ENCODE measurements at regions of chr16 and their contacts with region 1.

Region 1: GRCh38 chr16:10509534-10510025 is 70.8 kb downstream of the EMP2 start:
- DNase-seq: peak; percentile 58
- H3K4me3 Mint-ChIP-seq: no peak overlapping the region
- H3K27ac Mint-ChIP-seq: no peak overlapping the region
- H3K4me1 Mint-ChIP-seq: peaks cover 8% of the 10 kb centered on the region
- H3K27me3 Mint-ChIP-seq: peaks cover 11% of the 10 kb centered on the region

Region 2: GRCh38 chr16:10256784-10257641 is 252.6 kb before region 1 on chr16:
- CTCF ChIA-PET with region 1: interaction called, 28 read pairs
- POLR2A ChIA-PET with region 1: no interaction called
- DNase-seq: peak; percentile 43
- H3K4me3 Mint-ChIP-seq: no peak overlapping the region
- H3K27ac Mint-ChIP-seq: no peak overlapping the region
- H3K4me1 Mint-ChIP-seq: peaks cover 3% of the 10 kb centered on the region
- H3K27me3 Mint-ChIP-seq: peaks cover 8% of the 10 kb centered on the region

Region 3: DNA sequence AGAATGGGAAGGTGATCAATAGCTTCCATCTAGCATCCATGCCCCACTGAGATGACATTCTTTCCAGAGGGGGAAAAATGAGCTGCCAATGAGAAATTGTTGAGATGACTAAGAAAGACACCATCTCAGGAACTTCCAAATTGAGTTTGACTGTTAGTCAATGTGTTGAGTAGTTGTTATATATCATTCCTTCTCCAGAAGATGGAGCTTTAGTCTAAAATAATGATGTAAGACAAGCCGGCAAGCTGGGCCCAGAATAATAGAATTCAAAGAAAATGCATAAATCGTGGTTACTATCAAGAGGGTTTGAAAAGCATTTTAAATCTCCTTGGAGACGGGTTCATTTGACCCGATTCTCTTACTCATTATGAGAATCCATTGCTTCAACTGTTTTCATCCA is 194.8 kb before region 1 on chr16:
- CTCF ChIA-PET with region 1: interaction called, 21 read pairs
- POLR2A ChIA-PET with region 1: interaction called, 8 read pairs
- DNase-seq: no peak
- H3K4me3 Mint-ChIP-seq: no peak overlapping the region
- H3K27ac Mint-ChIP-seq: no peak overlapping the region
- H3K4me1 Mint-ChIP-seq: peaks cover 8% of the 10 kb centered on the region
- H3K27me3 Mint-ChIP-seq: no peaks in the 10 kb centered on the region

Region 4: DNA sequence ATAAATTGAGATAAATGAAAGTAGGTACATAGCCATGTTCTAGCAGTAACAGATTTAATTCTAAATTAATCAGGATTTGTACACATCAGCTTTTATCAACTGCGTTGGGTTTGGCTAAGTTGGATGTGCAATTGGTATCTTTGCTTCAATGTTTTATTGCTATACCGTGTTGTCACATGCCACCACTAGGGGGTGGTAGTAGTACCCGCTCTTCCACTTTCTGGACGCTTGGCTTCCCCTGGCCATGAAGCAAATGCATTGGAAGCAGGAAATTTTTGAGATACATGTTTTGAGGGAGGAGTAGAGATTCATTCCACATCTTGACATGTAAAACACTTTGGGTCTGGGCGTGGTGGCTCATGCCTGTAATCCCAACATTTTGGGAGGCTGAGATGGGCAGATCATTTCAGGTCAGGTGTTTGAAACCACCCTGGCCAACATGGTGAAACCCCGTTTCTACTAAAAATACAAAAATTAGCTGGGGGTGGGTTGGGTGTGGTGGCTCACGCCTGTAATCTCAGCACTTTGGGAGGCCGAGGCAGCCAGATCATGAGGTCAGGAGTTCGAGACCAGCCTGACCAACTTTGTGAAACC is 12.2 kb after region 1 on chr16:
- CTCF ChIA-PET with region 1: interaction called, 12 read pairs
- POLR2A ChIA-PET with region 1: no interaction called
- DNase-seq: peak; percentile 42
- H3K4me3 Mint-ChIP-seq: no peak overlapping the region
- H3K27ac Mint-ChIP-seq: no peak overlapping the region
- H3K4me1 Mint-ChIP-seq: peaks cover 2% of the 10 kb centered on the region
- H3K27me3 Mint-ChIP-seq: peaks cover 3% of the 10 kb centered on the region

Region 5: DNA sequence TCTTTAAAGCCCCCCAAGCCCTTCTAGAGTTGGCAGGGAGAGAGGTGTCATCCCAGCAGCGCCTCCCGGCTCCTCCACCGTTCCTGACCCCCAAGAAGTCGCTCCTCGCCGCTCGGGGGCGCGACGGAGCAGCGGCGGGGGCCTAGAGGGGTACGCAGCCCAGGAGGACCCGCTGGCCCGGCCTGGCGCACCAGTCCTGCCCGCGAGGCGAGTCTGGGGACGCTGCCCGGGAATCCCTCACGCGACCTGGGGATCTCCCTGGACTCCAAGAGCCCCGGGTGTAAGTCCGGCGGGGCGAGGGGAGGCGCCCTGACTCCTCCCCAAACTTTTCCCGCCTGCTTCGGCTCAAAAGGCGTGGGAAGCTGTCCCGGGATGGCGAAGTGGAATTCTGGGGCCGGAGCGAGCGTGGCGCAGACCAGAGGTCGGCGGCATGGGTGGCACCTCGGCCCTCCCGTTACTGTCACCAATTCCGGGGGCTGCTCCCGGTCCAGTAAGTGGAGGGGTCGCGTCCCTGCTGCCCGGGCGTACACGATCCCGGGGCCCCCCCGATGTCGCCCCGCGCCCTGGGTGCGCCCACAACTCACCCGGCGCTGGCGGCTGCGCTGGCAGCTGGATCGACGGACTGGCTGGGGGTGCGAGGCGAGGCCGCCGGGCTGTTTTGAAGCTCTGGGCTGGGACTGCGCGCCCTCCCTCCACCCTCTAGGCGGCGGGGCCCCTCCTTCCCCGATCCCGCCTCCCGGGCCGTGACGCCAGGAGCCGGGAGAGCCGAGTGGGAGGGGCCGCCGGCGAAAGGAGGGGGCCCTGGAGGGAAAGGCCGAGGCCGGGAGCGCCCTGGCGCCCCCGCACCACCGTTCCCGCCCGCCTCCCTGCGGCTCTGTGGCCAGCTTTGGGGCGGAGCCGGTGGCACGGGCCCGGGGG is 70.6 kb after region 1 on chr16 and contains the start of gene EMP2:
- CTCF ChIA-PET with region 1: no interaction called
- POLR2A ChIA-PET with region 1: no interaction called
- DNase-seq: no peak
- H3K4me3 Mint-ChIP-seq: no peak within 1 kb of the TSS
- H3K27ac Mint-ChIP-seq: no peak within 1 kb of the TSS
- H3K4me1 Mint-ChIP-seq: peaks cover 2% of the 10 kb centered on the region
- H3K27me3 Mint-ChIP-seq: peaks cover 52% of the 10 kb centered on the region
- total RNA-seq, gene EMP2: not detected

Region 6: DNA sequence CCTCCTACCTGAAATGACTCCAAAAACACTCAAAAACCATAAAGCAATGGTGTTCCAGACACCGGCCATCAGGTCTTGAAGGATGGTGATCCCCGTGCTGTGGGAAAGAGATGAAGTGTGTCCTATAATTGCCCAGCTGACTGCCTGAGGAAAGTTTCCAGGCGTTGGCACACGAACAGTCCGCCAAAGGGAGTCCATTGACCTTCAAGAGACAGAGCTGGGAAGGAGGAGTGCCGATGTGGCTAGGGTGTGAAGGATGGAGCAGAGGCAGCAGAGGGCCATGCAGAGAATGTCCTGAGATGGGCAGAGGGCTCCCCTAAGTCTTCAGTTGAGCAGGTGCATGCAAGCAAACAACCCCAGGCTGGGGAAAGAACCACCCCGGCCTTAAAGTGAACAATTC is 222.2 kb after region 1 on chr16:
- CTCF ChIA-PET with region 1: interaction called, 76 read pairs
- POLR2A ChIA-PET with region 1: no interaction called
- DNase-seq: no peak
- H3K4me3 Mint-ChIP-seq: no peak overlapping the region
- H3K27ac Mint-ChIP-seq: no peak overlapping the region
- H3K4me1 Mint-ChIP-seq: no peaks in the 10 kb centered on the region
- H3K27me3 Mint-ChIP-seq: no peaks in the 10 kb centered on the region

Region 7: GRCh38 chr16:10737068-10737625 is 227.6 kb after region 1 on chr16:
- CTCF ChIA-PET with region 1: interaction called, 76 read pairs
- POLR2A ChIA-PET with region 1: no interaction called
- DNase-seq: peak; percentile 78
- H3K4me3 Mint-ChIP-seq: peak overlapping the region; percentile 28
- H3K27ac Mint-ChIP-seq: peak overlapping the region; percentile 41
- H3K4me1 Mint-ChIP-seq: peaks cover 48% of the 10 kb centered on the region
- H3K27me3 Mint-ChIP-seq: no peaks in the 10 kb centered on the region